Gastrocnemius medialis (tissue), 4 donors: ENCODE measurements at regions of chr7 and their contacts with region 1.

Region 1: DNA sequence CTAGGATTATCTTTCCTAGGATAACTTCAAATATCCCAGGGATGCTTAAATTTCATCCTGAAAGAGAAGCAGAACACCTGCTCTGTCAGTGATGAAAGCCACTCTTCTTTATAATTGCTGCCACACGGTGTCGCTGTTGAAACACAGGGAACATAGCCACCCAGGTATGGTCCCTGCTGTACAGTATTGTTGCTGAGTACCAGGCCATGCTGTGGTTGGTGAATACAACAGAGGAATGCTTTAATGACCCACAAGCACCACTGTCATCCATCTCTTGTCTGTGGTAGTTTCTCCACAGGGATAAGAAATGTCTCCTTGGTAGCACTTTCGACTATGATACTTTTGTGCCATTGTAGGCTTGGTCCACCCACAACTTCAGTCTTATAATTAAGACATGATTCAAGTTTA is 70.6 kb upstream of the STARD3NL start:
- DNase-seq: peak; percentile 19 to 21
- ATAC-seq: peak in 1 of 2 donors; percentile 66
- H3K4me3 ChIP-seq: no peak overlapping the region
- H3K27ac ChIP-seq: no peak overlapping the region
- H3K4me1 ChIP-seq: no peaks in the 10 kb centered on the region
- H3K27me3 ChIP-seq: no peaks in the 10 kb centered on the region
- CTCF ChIP-seq: peak; percentile 49 to 73 (median 66)
- POLR2A ChIP-seq: no peak

Region 2: DNA sequence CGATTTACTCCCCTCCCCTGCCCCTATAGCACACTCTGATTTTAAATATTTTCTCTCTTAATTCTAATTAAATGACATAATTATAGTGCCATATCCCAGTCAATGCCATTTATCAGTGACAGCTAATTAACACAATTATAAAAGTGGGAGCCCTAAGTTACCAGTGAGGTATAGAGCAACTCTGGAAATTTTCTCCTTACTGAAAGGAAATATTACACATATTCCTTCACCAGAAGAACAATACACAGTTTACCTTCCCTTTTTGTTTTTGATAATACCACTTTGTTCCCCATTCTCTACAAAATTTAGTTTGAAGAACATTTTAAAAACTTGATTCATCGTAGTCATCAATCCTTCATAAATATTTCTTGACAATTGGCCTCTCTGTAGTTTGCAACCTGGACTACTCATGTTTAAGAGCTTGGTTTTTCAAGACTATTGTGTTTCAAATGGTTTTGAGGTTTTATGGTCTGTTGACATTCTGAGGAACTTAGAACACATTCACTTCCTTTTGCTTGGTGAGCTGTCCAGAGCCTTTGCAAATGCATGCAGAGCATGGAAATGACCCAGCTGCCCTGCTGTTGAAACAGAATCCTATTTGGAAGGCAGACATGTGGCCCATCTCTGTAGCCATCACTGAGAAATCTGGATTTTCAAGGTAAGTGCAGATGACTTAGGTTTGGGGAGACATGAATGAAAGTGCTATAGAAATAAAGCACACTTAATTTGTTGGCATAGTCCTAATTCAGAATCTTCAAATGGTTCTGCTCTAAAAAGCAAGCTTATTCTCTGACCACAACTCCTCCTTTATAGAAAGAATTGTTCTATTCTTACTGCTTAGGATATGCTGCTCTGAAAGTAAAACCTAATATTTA is 424.0 kb before region 1 on chr7 and contains the start of gene GPR141:
- in situ Hi-C with region 1: no loop called
- intact Hi-C with region 1: no loop called
- DNase-seq: no peak
- ATAC-seq: no peak
- H3K4me3 ChIP-seq: no peak within 1 kb of the TSS
- H3K27ac ChIP-seq: no peak within 1 kb of the TSS
- H3K4me1 ChIP-seq: no peaks in the 10 kb centered on the region
- H3K27me3 ChIP-seq: no peaks in the 10 kb centered on the region
- CTCF ChIP-seq: no peak
- POLR2A ChIP-seq: no peak
- total RNA-seq, gene GPR141: not detected

Region 3: GRCh38 chr7:37901236-37901827 is 206.2 kb before region 1 on chr7:
- in situ Hi-C with region 1: loop called in 2 of 4 experiments (anchors 5 to 10 kb)
- intact Hi-C with region 1: loop called (anchors 5 kb)
- DNase-seq: no peak
- ATAC-seq: peak in 1 of 2 donors; percentile 53
- H3K4me3 ChIP-seq: no peak overlapping the region
- H3K27ac ChIP-seq: no peak overlapping the region
- H3K4me1 ChIP-seq: peaks cover 5 to 12% of the 10 kb centered on the region in 2 donors
- H3K27me3 ChIP-seq: no peaks in the 10 kb centered on the region
- CTCF ChIP-seq: peak; percentile 33 to 59 (median 38)
- POLR2A ChIP-seq: no peak

Region 4: GRCh38 chr7:38222481-38223096 is 115.1 kb after region 1 on chr7:
- in situ Hi-C with region 1: loop called (anchors 5 kb)
- intact Hi-C with region 1: loop called (anchors 1 kb)
- DNase-seq: no peak
- ATAC-seq: peak; percentile 81 to 88
- H3K4me3 ChIP-seq: no peak overlapping the region
- H3K27ac ChIP-seq: peak overlapping the region in 2 of 4 donors; percentile 3
- H3K4me1 ChIP-seq: peaks cover 0 to 5% of the 10 kb centered on the region in 2 donors
- H3K27me3 ChIP-seq: no peaks in the 10 kb centered on the region
- CTCF ChIP-seq: peak; percentile 74 to 96 (median 89)
- POLR2A ChIP-seq: no peak

Region 5: GRCh38 chr7:38335492-38336147 is 228.1 kb after region 1 on chr7:
- in situ Hi-C with region 1: loop called in 2 of 4 experiments (anchors 25 kb)
- intact Hi-C with region 1: no loop called
- DNase-seq: peak; percentile 40 to 63
- ATAC-seq: peak; percentile 55 to 65
- H3K4me3 ChIP-seq: no peak overlapping the region
- H3K27ac ChIP-seq: no peak overlapping the region
- H3K4me1 ChIP-seq: no peaks in the 10 kb centered on the region
- H3K27me3 ChIP-seq: no peaks in the 10 kb centered on the region
- CTCF ChIP-seq: peak in 4 of 5 experiments; percentile 28 to 67 (median 58)
- POLR2A ChIP-seq: no peak

Region 6: DNA sequence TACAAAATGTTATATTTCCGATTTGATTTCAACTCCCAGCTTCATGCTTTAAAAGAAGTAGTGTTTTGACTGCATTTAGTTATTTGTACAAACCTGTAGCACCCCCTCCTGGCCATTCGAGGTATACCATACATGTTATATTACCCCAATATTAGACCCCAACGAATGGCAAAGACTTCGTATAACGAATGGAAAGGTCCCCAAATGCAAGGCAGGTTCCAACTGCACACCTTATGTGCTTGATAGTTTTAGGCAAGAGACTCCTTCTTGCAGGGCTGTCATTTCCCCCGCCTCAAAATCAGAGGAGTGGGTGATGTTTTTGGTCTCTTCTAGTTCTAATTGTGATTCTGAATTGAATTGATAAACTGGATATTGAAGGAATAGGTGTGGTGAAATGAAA is 267.0 kb after region 1 on chr7:
- in situ Hi-C with region 1: no loop called
- intact Hi-C with region 1: loop called (anchors 2 kb)
- DNase-seq: no peak
- ATAC-seq: no peak
- H3K4me3 ChIP-seq: no peak overlapping the region
- H3K27ac ChIP-seq: no peak overlapping the region
- H3K4me1 ChIP-seq: peaks cover 0 to 1% of the 10 kb centered on the region in 2 donors
- H3K27me3 ChIP-seq: no peaks in the 10 kb centered on the region
- CTCF ChIP-seq: peak in 3 of 5 experiments; percentile 25 to 46 (median 37)
- POLR2A ChIP-seq: no peak